Ascending aorta (tissue), 2 donors: ENCODE measurements at regions of chr6 and their contacts with region 1.

Region 1: GRCh38 chr6:155493694-155494143 is 38.1 kb upstream of the NOX3 start:
- DNase-seq: peak; percentile 56 to 92
- H3K4me3 ChIP-seq: no peak overlapping the region
- H3K27ac ChIP-seq: peak overlapping the region; percentile 88 to 92
- H3K4me1 ChIP-seq: peaks cover 7 to 22% of the 10 kb centered on the region in 2 donors
- H3K27me3 ChIP-seq: no peaks in the 10 kb centered on the region
- CTCF ChIP-seq: no peak

Region 2: DNA sequence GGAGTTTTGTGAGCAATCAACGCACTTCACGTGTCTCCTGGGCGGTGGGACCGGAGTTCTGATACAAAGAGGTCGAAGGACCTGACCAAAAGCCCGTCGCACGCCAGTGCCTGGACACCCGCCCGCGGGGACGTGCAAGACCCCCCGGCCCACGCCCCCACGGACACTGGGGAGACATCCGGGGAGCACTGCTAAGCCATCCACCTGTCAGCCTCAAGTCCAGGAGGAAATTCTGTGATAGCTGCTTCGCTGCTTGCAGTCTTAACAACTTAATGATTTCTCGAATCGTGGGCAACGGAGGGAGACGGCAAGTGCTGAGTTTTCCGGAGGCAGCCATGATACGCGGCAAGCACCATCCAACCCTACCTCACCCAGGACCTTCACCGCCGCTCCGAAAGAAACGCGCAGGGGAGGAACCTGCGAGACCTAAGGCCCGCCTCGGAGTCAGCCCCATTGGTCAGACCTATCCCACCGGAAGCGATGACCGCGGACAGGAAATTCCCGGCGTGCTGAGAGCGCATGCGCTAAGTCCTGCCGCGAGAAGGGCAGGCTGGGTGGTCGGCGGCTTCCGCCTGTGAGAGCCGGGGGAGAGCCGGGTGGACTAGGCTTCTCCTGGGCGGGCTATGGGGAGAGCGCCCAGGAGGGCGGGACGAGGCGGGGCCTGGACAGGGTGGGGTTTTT is 179.5 kb before region 1 on chr6 and contains the start of gene TFB1M:
- intact Hi-C with region 1: loop called (anchors 1 kb)
- DNase-seq: peak; percentile 94 to 99
- H3K4me3 ChIP-seq: peak within 1 kb of the TSS; percentile 77 to 90
- H3K27ac ChIP-seq: peak within 1 kb of the TSS; percentile 79 to 84
- H3K4me1 ChIP-seq: peaks cover 0 to 3% of the 10 kb centered on the region in 2 donors
- H3K27me3 ChIP-seq: no peaks in the 10 kb centered on the region
- CTCF ChIP-seq: no peak
- total RNA-seq, gene TFB1M: 2.9 TPM

Region 3: GRCh38 chr6:155327326-155328073 is 166.2 kb before region 1 on chr6:
- intact Hi-C with region 1: loop called (anchors 5 kb)
- DNase-seq: peak in 1 of 2 donors; percentile 70
- H3K4me3 ChIP-seq: no peak overlapping the region
- H3K27ac ChIP-seq: no peak overlapping the region
- H3K4me1 ChIP-seq: no peaks in the 10 kb centered on the region
- H3K27me3 ChIP-seq: no peaks in the 10 kb centered on the region
- CTCF ChIP-seq: peak; percentile 68 to 87 (median 77)

Region 4: GRCh38 chr6:155418017-155418761 is 75.5 kb before region 1 on chr6:
- intact Hi-C with region 1: loop called (anchors 2 kb)
- DNase-seq: peak; percentile 30 to 76
- H3K4me3 ChIP-seq: peak overlapping the region; percentile 17 to 33
- H3K27ac ChIP-seq: peak overlapping the region; percentile 30 to 61
- H3K4me1 ChIP-seq: no peaks in the 10 kb centered on the region
- H3K27me3 ChIP-seq: no peaks in the 10 kb centered on the region
- CTCF ChIP-seq: no peak

Region 5: GRCh38 chr6:155530219-155530834 is 36.6 kb after region 1 on chr6:
- intact Hi-C with region 1: loop called (anchors 1 kb)
- DNase-seq: no peak
- H3K4me3 ChIP-seq: no peak overlapping the region
- H3K27ac ChIP-seq: peak overlapping the region in 1 of 2 donors; percentile 68
- H3K4me1 ChIP-seq: peaks cover 0 to 15% of the 10 kb centered on the region in 2 donors
- H3K27me3 ChIP-seq: no peaks in the 10 kb centered on the region
- CTCF ChIP-seq: peak; percentile 59 to 81 (median 70)